ENCODE measurements at regions of chr3 and their contacts with region 1.

Region 1: GRCh38 chr3:11803977-11804892 is 42.5 kb downstream of the TAMM41 start:
- DNase-seq: peak; percentile 56
- H3K4me3 Mint-ChIP-seq: no peak overlapping the region
- H3K27ac Mint-ChIP-seq: no peak overlapping the region
- H3K4me1 Mint-ChIP-seq: peaks cover 28% of the 10 kb centered on the region
- H3K27me3 Mint-ChIP-seq: no peaks in the 10 kb centered on the region

Region 2: DNA sequence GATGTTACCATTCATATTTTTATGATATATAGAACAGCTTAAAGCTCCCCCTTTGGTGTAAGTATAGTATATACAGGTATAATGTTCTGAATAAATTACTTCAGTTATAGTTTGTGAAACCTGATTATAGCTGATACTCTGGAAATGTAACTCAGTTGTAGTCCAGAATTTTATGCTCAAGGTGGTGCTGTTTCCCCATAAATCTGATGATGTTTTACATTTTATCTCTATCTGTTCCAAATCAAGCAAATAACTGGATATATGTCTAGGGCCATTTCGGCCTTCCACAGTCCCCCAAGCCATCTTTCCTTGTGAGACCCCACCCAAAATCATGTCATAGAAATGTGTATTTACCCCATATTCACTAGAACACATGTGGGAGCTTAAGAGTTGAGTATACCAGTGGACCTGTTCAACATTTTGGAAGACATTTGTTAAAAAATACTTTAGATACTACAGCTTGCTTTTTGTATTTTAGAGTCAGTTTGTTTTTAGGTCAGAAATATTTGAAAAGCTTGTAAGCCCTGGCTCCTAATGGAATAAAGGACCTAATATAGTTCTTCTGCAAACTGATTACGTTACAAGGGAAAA is 424.9 kb before region 1 on chr3:
- CTCF ChIA-PET with region 1: interaction called, 12 read pairs
- POLR2A ChIA-PET with region 1: no interaction called
- DNase-seq: no peak
- H3K4me3 Mint-ChIP-seq: no peak overlapping the region
- H3K27ac Mint-ChIP-seq: no peak overlapping the region
- H3K4me1 Mint-ChIP-seq: peaks cover 3% of the 10 kb centered on the region
- H3K27me3 Mint-ChIP-seq: no peaks in the 10 kb centered on the region

Region 3: DNA sequence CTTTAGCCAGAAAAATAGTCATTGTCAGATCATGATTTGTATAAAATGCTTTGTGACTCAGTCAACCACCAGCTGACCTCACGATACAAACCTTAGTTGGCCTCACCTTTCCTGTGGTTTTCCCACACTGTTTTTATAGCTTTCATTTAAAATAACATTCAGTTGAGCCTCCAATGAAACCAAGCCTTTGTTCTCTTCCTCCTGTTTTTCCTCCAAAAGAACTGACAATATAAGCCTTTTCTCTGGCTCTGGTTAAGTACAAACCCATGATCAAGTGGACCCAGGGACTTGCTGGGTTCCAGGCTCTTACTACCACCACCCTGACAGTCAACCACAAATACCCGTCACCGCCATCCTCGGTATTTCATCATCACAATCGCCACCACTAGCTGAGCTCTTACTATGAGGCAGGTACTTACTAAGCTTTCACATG is 39.3 kb before region 1 on chr3:
- CTCF ChIA-PET with region 1: interaction called, 13 read pairs
- POLR2A ChIA-PET with region 1: no interaction called
- DNase-seq: peak; percentile 80
- H3K4me3 Mint-ChIP-seq: peak overlapping the region; percentile 61
- H3K27ac Mint-ChIP-seq: peak overlapping the region; percentile 96
- H3K4me1 Mint-ChIP-seq: peaks cover 39% of the 10 kb centered on the region
- H3K27me3 Mint-ChIP-seq: no peaks in the 10 kb centered on the region

Region 4: DNA sequence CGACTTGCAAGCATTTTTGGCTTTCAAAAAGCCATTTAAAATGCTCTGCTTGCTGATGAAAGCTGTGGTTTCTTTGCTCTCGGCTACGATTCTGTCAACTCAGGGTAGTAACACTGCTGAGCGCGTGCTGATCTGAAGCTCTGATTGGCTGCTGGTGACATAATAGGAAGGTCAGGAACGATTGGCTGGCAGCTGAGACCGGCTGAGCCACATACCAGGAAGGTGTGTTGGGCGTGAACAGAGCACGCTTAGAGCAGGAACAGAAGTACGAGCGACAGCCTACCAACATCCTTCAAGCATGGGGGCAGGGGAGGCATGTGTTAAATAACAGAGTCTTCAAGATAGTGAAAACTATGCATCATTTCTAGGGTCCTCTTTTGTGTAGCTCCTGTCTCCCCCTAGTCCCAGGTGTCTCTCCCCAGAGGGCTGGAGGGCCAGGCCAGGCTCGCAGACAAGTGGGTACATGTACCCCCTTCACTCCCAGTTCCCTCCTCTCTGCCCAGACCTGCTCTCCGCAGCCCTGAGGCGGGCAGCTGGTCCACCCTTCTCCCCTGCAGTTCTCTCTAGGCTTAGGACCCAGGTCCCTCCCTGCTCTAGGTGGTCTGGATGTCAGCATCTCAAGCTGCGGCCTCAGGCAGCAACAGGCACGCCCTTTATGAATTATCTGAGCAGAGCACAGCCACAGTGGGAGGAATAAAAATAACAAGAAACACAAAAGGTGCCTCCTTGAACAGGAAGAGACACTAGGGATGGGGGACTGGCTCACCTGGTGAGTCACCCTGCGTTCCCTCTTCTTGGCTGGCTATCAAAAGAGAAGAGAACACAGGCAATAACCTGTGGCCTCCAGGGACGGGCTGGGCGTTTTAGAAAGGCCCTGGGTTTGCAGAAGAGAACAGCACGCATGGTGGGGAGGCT is 33.5 kb before region 1 on chr3:
- CTCF ChIA-PET with region 1: interaction called, 13 read pairs
- POLR2A ChIA-PET with region 1: interaction called, 5 read pairs
- DNase-seq: peak; percentile 91
- H3K4me3 Mint-ChIP-seq: peak overlapping the region; percentile 26
- H3K27ac Mint-ChIP-seq: peak overlapping the region; percentile 83
- H3K4me1 Mint-ChIP-seq: peaks cover 40% of the 10 kb centered on the region
- H3K27me3 Mint-ChIP-seq: no peaks in the 10 kb centered on the region

Region 5: DNA sequence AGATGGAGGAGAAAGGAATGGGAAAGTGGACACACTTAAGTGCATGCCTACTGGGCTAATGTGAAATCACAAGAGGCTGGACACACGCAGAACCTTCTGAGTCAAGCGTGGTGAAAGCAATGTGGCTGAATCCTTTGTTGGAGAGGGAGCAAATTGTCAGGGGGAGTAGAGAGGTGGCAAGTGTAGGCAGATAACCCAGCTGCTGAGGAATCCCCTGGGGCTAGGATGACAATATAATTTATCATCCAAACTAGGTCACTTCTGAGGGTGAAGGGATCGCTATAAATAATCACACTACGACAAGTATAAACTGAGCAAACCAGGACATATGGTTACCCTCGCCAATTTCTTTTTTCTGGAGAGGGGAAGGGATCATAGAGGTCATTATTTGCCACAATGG is 13.8 kb after region 1 on chr3:
- CTCF ChIA-PET with region 1: interaction called, 14 read pairs
- POLR2A ChIA-PET with region 1: interaction called, 6 read pairs
- DNase-seq: no peak
- H3K4me3 Mint-ChIP-seq: no peak overlapping the region
- H3K27ac Mint-ChIP-seq: no peak overlapping the region
- H3K4me1 Mint-ChIP-seq: peaks cover 34% of the 10 kb centered on the region
- H3K27me3 Mint-ChIP-seq: no peaks in the 10 kb centered on the region